Activated naive CD4-positive, alpha-beta T cell treated with anti-CD3 and anti-CD28 coated beads for 36 hours (primary cell): ENCODE measurements at regions of chr6 and their contacts with region 1.

Region 1: GRCh38 chr6:89940225-89941027 is 46.2 kb downstream of the GJA10 start:
- DNase-seq: peak; percentile 86
- H3K4me3 Mint-ChIP-seq: no peak overlapping the region
- H3K27ac Mint-ChIP-seq: peak overlapping the region; percentile 74
- H3K4me1 Mint-ChIP-seq: peaks cover 70% of the 10 kb centered on the region
- H3K27me3 Mint-ChIP-seq: no peaks in the 10 kb centered on the region

Region 2: GRCh38 chr6:89952686-89953085 is 12.3 kb after region 1 on chr6:
- CTCF ChIA-PET with region 1: interaction called, 22 read pairs
- intact Hi-C with region 1: loop called (anchors 1 kb)
- DNase-seq: peak; percentile 70
- H3K4me3 Mint-ChIP-seq: no peak overlapping the region
- H3K27ac Mint-ChIP-seq: peak overlapping the region; percentile 75
- H3K4me1 Mint-ChIP-seq: peaks cover 74% of the 10 kb centered on the region
- H3K27me3 Mint-ChIP-seq: no peaks in the 10 kb centered on the region

Region 3: GRCh38 chr6:90179190-90180169 is 239.1 kb after region 1 on chr6:
- CTCF ChIA-PET with region 1: interaction called, 8 read pairs
- intact Hi-C with region 1: loop called (anchors 1 kb)
- DNase-seq: peak; percentile 56
- H3K4me3 Mint-ChIP-seq: no peak overlapping the region
- H3K27ac Mint-ChIP-seq: peak overlapping the region; percentile 85
- H3K4me1 Mint-ChIP-seq: peaks cover 81% of the 10 kb centered on the region
- H3K27me3 Mint-ChIP-seq: no peaks in the 10 kb centered on the region

Region 4: DNA sequence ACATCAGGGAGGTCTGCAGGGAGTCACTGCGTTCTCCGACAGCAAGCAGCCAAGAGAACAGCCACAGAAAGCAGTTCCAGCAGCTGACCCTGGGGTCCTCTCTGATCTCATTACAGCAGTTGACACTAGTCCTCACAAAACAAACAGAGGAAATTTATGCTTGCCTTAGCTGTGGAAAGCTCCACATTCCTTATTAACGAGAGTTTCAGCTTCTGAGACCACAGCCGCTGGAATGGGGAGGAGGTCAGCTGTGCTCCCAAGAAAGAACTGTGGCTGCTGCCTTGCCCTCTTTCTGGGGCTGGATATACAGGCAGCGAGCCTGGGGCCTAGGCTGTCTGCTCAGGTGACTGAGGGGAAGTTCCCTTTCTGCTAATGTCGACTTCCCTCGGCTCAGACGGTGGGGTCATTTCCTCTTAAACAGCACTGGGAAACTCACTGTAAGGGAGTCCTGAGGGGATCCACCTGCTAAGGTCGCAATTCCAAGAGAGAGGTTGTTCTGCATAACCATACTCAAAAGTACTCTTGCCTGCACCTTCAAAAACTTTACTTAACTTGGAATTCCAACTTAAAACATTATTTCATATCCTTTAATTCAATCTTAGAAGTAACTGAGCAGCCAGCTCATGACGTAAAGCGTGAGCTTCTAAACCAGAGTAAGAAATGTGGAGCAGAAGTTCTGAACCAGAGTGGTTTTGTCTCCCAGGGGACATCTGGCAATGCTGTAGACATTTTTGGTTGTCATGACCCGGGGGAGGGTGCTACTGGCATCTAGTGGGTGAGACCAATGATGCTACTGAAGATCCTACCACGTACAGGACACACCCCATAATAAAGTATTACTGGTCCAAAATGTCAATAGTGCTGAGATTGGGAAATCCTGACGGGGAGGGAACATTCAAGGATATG is 275.9 kb after region 1 on chr6:
- CTCF ChIA-PET with region 1: interaction called, 9 read pairs
- intact Hi-C with region 1: loop called (anchors 1 kb)
- DNase-seq: peak; percentile 76
- H3K4me3 Mint-ChIP-seq: peak overlapping the region; percentile 14
- H3K27ac Mint-ChIP-seq: no peak overlapping the region
- H3K4me1 Mint-ChIP-seq: peaks cover 32% of the 10 kb centered on the region
- H3K27me3 Mint-ChIP-seq: no peaks in the 10 kb centered on the region